ENCODE measurements at regions of chr20 and their contacts with region 1.

Region 1: DNA sequence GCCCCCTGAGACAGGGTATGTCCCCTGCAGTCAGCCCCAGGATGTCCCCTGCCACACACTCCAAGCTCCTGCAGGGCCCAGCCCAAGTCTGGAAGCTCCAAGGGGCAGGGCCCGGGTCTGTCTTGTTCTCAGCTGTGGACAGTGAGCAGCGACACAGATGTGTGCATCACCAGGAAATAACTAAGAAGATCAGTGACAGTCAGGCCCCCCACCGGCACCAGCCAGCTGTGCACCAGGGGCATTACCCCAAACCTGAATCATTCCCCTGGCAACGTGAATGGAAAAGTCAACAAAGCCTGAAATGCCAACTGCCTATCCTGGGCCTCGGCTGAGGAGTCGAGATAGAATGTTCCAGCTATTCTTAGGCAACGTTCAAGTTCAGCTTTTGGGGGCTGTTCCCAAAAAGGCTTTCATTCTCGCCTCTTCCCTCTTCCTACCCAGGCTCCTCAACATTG is 105.0 kb downstream of the PREX1 start:
- DNase-seq: peak; percentile 36 to 93
- H3K4me3 ChIP-seq: peak overlapping the region in 1 of 2 donors; percentile 39
- H3K27ac ChIP-seq: peak overlapping the region; percentile 90 to 97
- H3K4me1 ChIP-seq: peaks cover 27 to 69% of the 10 kb centered on the region in 2 donors
- H3K27me3 ChIP-seq: no peaks in the 10 kb centered on the region
- CTCF ChIP-seq: peak; percentile 26 to 38 (median 31)

Region 2: GRCh38 chr20:48657475-48658470 is 65.0 kb before region 1 on chr20:
- intact Hi-C with region 1: loop called (anchors 1 kb)
- DNase-seq: peak; percentile 21 to 81
- H3K4me3 ChIP-seq: no peak overlapping the region
- H3K27ac ChIP-seq: peak overlapping the region; percentile 29 to 59
- H3K4me1 ChIP-seq: peaks cover 7 to 35% of the 10 kb centered on the region in 2 donors
- H3K27me3 ChIP-seq: no peaks in the 10 kb centered on the region
- CTCF ChIP-seq: peak; percentile 93 to 98 (median 95)

Region 3: GRCh38 chr20:48706173-48707015 is 16.4 kb before region 1 on chr20:
- intact Hi-C with region 1: loop called (anchors 1 kb)
- DNase-seq: no peak
- H3K4me3 ChIP-seq: no peak overlapping the region
- H3K27ac ChIP-seq: peak overlapping the region; percentile 82 to 96
- H3K4me1 ChIP-seq: peaks cover 29 to 79% of the 10 kb centered on the region in 2 donors
- H3K27me3 ChIP-seq: no peaks in the 10 kb centered on the region
- CTCF ChIP-seq: no peak

Region 4: DNA sequence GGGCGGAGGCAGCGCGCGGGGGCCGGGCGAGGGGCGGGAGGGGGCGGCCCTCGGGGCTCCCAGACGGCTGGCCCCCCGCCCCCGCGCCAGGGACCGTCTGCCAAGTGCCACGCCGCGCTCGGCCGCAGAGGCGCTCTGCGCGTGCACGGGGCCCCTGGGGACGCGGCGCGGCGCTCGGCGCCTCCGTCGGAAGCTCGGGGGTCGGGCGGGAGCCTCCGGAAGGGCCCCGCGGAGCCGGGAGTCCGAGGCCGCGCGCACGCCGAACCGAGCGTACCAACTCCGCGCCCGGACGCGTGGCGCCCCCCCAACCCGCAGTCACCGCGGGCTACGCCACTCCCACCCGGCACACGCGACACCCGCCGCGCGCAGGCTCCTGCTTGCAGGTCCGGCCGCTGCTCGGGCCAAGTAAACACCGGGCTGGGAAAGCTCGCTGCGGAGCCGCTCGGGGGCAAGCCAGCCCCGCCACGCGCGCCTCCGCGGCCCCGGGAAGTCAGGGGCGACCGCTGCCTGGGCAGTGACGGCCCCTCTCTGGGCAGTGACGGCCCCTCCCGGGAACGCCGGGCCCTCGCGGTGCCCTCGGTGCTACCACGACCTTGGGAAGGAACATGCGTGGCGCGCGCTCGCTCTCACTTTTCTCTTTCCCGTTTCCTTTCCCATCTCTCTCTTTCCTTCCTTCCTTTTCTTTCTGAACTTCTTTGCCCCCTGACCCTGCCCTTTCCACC is 105.4 kb after region 1 on chr20:
- intact Hi-C with region 1: loop called (anchors 2 kb)
- DNase-seq: peak; percentile 50 to 88
- H3K4me3 ChIP-seq: peak overlapping the region; percentile 75 to 88
- H3K27ac ChIP-seq: peak overlapping the region; percentile 47 to 76
- H3K4me1 ChIP-seq: peaks cover 9 to 29% of the 10 kb centered on the region in 2 donors
- H3K27me3 ChIP-seq: no peaks in the 10 kb centered on the region
- CTCF ChIP-seq: peak in 1 of 3 experiments; percentile 62

Region 5: DNA sequence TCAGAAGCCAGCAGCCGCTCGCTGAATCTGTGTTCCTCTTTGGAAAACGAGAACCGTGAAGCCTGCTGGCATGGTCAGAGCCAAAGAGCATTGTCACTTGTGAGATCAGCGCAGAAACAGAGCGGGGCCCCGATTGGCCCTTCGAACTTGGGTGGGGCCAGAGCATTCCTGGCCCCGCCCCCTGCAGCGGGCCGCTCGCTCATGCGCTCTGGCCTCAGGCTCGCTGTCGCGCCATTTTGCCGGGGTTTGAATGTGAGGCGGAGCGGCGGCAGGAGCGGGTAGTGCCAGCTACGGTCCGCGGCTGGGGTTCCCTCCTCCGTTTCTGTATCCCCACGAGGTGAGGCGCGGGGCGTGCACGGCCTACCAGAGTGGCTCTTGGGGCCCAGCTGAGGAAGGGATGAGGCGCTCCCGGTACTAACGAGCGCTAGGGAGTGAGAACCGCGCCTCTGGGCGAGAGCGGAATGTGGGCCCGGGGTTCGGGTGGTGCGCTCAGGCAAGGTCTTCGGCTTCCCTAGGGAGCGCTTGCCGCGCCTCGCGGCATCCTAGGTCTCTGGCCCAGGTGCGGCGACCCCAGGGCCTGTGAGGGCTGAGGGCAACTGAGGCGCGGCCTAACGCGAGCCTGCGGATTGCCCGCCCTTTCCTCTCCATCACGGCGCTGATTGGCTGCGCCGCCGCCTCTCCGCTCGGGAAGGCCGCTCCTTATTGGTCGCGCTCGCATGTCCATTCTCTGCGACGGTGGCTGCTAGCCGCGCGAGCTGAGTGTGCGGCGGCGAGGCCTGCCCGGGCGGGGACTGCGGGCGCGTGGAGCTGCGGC is 323.5 kb after region 1 on chr20 and contains the start of gene CSE1L:
- intact Hi-C with region 1: loop called (anchors 2 kb)
- DNase-seq: peak; percentile 87 to 96
- H3K4me3 ChIP-seq: peak within 1 kb of the TSS; percentile 91 to 98
- H3K27ac ChIP-seq: peak within 1 kb of the TSS; percentile 88 to 95
- H3K4me1 ChIP-seq: peaks cover 6 to 15% of the 10 kb centered on the region in 2 donors
- H3K27me3 ChIP-seq: no peaks in the 10 kb centered on the region
- CTCF ChIP-seq: peak in 1 of 3 experiments; percentile 27
- total RNA-seq, gene CSE1L: 13.6 TPM